Activated naive CD4-positive, alpha-beta T cell treated with anti-CD3 and anti-CD28 coated beads, Interleukin-2, amount 10 ng/mL, durations not matched to agents 7 days and 5 days (primary cell): ENCODE measurements at regions of chr17 and their contacts with region 1.

Region 1: GRCh38 chr17:47229535-47230443 is 20.6 kb downstream of the MYL4 start:
- DNase-seq: peak; percentile 80
- H3K4me3 Mint-ChIP-seq: peak overlapping the region; percentile 36
- H3K27ac Mint-ChIP-seq: no peak overlapping the region
- H3K4me1 Mint-ChIP-seq: peaks cover 15% of the 10 kb centered on the region
- H3K27me3 Mint-ChIP-seq: peaks cover 45% of the 10 kb centered on the region

Region 2: GRCh38 chr17:47077576-47077975 is 152.2 kb before region 1 on chr17:
- CTCF ChIA-PET with region 1: no interaction called
- DNase-seq: no peak
- H3K4me3 Mint-ChIP-seq: no peak overlapping the region
- H3K27ac Mint-ChIP-seq: no peak overlapping the region
- H3K4me1 Mint-ChIP-seq: peaks cover 10% of the 10 kb centered on the region
- H3K27me3 Mint-ChIP-seq: no peaks in the 10 kb centered on the region

Region 3: GRCh38 chr17:47205419-47205963 is 24.3 kb before region 1 on chr17:
- CTCF ChIA-PET with region 1: interaction called, 15 read pairs
- DNase-seq: peak; percentile 84
- H3K4me3 Mint-ChIP-seq: peak overlapping the region; percentile 46
- H3K27ac Mint-ChIP-seq: peak overlapping the region; percentile 96
- H3K4me1 Mint-ChIP-seq: peaks cover 52% of the 10 kb centered on the region
- H3K27me3 Mint-ChIP-seq: peaks cover 10% of the 10 kb centered on the region

Region 4: DNA sequence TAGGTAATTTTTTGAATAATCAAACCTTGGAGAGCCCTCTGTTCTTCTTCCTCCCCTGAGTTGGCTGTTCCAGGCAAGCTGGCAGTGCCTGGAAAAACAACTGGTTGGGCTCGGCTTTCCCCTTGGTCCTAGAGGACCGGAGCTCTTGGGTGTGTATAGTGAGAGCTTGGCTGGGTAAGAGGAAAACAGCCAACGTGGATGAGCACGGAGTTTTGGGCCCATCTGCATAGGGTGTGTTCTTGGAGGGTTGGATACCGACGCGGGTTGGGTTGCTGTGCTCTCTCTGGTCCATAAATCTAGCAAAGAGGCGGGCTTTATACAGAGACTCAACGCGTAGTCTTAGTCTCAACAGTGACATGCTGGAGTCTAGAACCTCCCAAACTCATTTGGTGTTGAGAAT is 47.1 kb after region 1 on chr17:
- CTCF ChIA-PET with region 1: no interaction called
- DNase-seq: no peak
- H3K4me3 Mint-ChIP-seq: no peak overlapping the region
- H3K27ac Mint-ChIP-seq: no peak overlapping the region
- H3K4me1 Mint-ChIP-seq: peaks cover 5% of the 10 kb centered on the region
- H3K27me3 Mint-ChIP-seq: peaks cover 46% of the 10 kb centered on the region

Region 5: GRCh38 chr17:47315451-47316266 is 85.9 kb after region 1 on chr17:
- CTCF ChIA-PET with region 1: interaction called, 47 read pairs
- DNase-seq: peak; percentile 45
- H3K4me3 Mint-ChIP-seq: no peak overlapping the region
- H3K27ac Mint-ChIP-seq: no peak overlapping the region
- H3K4me1 Mint-ChIP-seq: no peaks in the 10 kb centered on the region
- H3K27me3 Mint-ChIP-seq: peaks cover 17% of the 10 kb centered on the region